ENCODE measurements at regions of chr6 and their contacts with region 1.

Region 1: GRCh38 chr6:57089687-57090460 is at the start of gene ZNF451:
- DNase-seq: peak; percentile 96 to 99 (median 98)

Region 2: GRCh38 chr6:57048577-57048976 is 41.3 kb before region 1 on chr6:
- intact Hi-C with region 1: loop called (anchors 5 kb)
- DNase-seq: no peak

Measured in head of caudate nucleus (tissue), 42 donors.